ENCODE measurements at regions of chr2 and their contacts with region 1.

Region 1: GRCh38 chr2:38465789-38466127 is 88.7 kb upstream of the ATL2 start:
- DNase-seq: peak in 1 of 5 donors; percentile 32
- H3K4me3 ChIP-seq: no peak overlapping the region
- H3K27ac ChIP-seq: peak overlapping the region in 1 of 2 donors; percentile 78
- H3K4me1 ChIP-seq: peaks cover 37% of the 10 kb centered on the region
- H3K27me3 ChIP-seq: no peaks in the 10 kb centered on the region
- CTCF ChIP-seq: no peak
- EP300 ChIP-seq: no peak
- POLR2A ChIP-seq: no peak

Region 2: DNA sequence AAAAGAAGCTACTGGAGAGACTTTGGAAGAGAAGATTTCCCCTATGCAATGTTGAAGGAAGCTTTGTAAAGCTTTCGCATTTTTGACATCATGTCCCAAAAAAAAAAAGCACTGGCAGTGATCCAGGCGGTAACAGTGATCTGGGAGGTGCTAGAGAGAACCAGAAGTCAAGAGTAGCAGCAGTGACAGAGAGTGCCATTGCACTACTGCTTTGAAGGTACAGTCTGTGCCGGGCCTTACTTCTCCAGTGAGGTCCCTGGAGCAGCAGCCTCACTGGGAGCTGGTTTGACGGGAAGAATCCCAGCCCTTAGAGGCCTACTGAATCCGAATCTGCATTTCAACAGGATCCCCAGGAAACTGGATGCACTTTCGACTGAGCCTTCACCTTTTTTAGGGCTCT is 37.8 kb before region 1 on chr2:
- intact Hi-C with region 1: no loop called
- DNase-seq: no peak
- H3K4me3 ChIP-seq: no peak overlapping the region
- H3K27ac ChIP-seq: no peak overlapping the region
- H3K4me1 ChIP-seq: peaks cover 6% of the 10 kb centered on the region
- H3K27me3 ChIP-seq: no peaks in the 10 kb centered on the region
- CTCF ChIP-seq: no peak
- EP300 ChIP-seq: no peak
- POLR2A ChIP-seq: no peak

Region 3: GRCh38 chr2:38528008-38528442 is 62.3 kb after region 1 on chr2:
- intact Hi-C with region 1: loop called in 1 of 4 experiments (anchors 10 kb)
- DNase-seq: peak; percentile 51 to 73 (median 56)
- H3K4me3 ChIP-seq: peak overlapping the region; percentile 34
- H3K27ac ChIP-seq: peak overlapping the region in 1 of 2 donors; percentile 77
- H3K4me1 ChIP-seq: peaks cover 4% of the 10 kb centered on the region
- H3K27me3 ChIP-seq: no peaks in the 10 kb centered on the region
- CTCF ChIP-seq: no peak
- EP300 ChIP-seq: no peak
- POLR2A ChIP-seq: no peak

Measured in ovary (tissue), 10 donors.